ENCODE measurements at regions of chr5 and their contacts with region 1.

Region 1: DNA sequence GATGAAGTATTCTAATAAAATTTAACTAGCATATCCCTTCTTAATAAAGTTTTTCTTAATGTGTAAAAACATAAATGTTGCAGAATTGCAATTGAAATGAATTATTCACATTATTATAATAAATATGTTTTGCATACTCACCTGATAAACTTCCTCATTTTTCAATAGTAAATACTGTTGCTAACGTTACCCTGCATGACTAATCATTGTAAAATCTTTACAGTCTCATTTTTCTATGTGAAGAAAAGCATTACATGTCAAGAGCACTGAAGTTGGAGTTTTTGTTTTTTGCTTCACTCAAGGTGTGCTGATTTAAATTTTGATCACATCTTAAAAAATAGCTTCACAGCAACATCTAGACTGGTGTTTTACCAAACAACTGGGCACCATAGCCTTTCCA is 157.2 kb upstream of the CDH18 start:
- DNase-seq: no peak

Region 2: GRCh38 chr5:20105915-20106314 is 39.3 kb before region 1 on chr5:
- intact Hi-C with region 1: loop called in 1 of 2 experiments (anchors 2 kb)
- DNase-seq: no peak